Activated B cell treated with CpG ODN at 0.5 μM for 24 hours (primary cell): ENCODE measurements at regions of chr2 and their contacts with region 1.

Region 1: DNA sequence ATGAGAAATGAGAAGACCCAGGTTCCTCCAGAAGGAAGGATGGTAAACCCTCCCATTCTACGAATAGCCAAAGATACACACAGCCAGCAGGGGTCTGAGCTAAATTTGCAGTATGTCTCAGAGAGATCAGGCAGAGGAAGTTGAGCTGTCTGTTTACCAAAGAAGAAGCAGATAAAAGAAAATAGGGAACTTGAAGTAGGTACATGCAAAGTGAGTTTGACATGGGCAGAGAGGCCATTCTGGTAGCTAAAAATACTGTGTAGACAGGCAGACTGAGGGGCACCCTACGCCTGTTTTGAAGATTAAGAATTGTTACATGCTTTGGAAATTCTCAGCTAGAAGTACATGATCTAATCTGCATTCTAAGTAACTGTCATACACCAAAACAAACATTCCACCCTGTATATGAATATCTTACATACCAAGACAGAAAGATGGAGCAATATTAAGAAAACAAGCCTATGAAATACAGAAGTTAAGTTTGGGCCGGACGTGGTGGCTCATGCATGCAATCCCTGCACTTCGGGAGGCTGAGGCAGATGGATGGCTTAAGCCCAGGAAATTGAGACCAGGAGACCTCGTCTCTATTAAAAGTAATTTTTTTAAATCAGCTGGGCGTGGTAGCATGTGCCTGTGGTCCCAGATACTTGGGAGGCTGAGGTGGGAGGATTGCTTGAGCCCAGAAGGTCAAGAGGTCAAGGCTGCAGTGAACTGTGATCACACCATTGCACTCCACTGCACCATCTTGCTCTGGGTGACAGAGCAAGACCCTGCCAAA is 157.9 kb downstream of the ANKRD44 start:
- DNase-seq: no peak
- ATAC-seq: peak; percentile 84
- H3K4me3 Mint-ChIP-seq: peak overlapping the region; percentile 79
- H3K27ac Mint-ChIP-seq: peak overlapping the region; percentile 97
- H3K4me1 Mint-ChIP-seq: peaks cover 97% of the 10 kb centered on the region
- H3K27me3 Mint-ChIP-seq: no peaks in the 10 kb centered on the region
- CTCF ChIP-seq: no peak

Region 2: DNA sequence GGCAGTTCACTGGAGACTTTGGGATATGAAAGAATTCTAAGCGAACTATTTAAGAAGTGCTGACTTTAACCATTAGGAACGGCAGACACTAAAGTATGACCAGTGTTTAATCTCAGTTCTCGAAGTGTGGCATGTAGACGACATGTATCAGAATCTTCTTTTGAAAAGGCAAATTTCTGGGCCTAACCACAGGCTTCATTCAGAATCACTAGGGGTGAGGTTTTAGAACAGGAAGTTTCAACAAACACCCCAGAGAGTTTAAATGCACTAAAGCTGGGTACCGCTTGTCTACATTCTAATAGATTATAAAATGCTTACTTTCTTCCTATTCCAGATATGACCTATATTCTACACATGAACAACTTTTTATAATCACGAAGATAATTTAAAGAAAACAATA is 22.3 kb before region 1 on chr2:
- CTCF ChIA-PET with region 1: interaction called, 5 read pairs
- POLR2A ChIA-PET with region 1: interaction called, 34 read pairs
- intact Hi-C with region 1: loop called (anchors 1 kb)
- DNase-seq: no peak
- ATAC-seq: peak; percentile 69
- H3K4me3 Mint-ChIP-seq: peak overlapping the region; percentile 82
- H3K27ac Mint-ChIP-seq: peak overlapping the region; percentile 98
- H3K4me1 Mint-ChIP-seq: peaks cover 71% of the 10 kb centered on the region
- H3K27me3 Mint-ChIP-seq: no peaks in the 10 kb centered on the region
- CTCF ChIP-seq: no peak

Region 3: GRCh38 chr2:197137231-197137630 is 15.4 kb before region 1 on chr2:
- CTCF ChIA-PET with region 1: interaction called, 8 read pairs
- POLR2A ChIA-PET with region 1: interaction called, 34 read pairs
- intact Hi-C with region 1: loop called (anchors 1 kb)
- DNase-seq: no peak
- ATAC-seq: no peak
- H3K4me3 Mint-ChIP-seq: peak overlapping the region; percentile 17
- H3K27ac Mint-ChIP-seq: peak overlapping the region; percentile 79
- H3K4me1 Mint-ChIP-seq: peaks cover 94% of the 10 kb centered on the region
- H3K27me3 Mint-ChIP-seq: no peaks in the 10 kb centered on the region
- CTCF ChIP-seq: no peak